Dendritic cell treated with granulocyte-macrophage colony-stimulating factor and Interleukin-4, amounts not matched to agents 40 ng/mL and 50 ng/mL, for 4 days (primary cell): ENCODE measurements at regions of chr19 and their contacts with region 1.

Region 1: DNA sequence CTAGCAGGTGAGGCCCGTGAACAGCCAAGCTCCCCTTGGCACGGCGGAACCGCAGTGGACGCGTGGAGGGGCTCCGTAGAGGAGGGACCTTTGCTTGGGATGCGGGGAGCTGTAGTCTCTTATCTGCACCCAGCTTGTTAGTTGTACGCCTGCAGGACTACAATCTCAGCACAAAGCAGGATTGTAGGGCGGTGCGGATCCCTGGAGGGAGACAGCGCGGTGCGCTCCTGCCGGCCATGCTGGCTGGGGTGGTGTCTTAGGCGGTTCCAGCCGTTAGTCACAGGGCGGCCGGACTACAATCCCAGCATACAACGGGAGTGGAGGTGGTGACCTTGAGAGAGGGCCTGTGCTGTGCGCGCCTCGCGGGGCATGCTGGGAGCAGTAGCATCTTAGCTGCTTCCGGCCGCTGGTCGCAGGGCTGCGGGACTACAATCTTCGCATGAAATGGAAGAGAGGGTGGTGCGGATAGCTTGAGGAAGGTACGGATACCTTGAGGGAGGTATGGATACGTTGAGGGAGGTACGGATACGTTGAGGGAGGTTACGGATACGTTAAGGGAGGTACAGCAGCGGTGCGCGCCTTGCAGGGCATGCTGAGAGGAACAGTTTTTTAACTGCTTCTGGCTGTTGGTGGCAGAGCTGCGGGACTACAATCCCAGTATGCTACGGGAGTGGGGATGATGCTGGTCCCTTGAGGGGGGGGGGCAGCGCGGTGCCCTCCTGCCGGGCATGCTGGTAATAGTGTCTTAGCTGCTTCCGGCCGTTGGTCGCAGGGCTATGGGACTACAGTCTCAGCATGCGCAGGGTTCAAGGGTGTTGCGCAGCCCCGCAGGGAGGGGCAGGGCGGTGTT is 1419.1 kb downstream of the UQCRFS1 start:
- H3K4me3 Mint-ChIP-seq: peak overlapping the region; percentile 93
- H3K27ac Mint-ChIP-seq: peak overlapping the region; percentile 91
- H3K4me1 Mint-ChIP-seq: peaks cover 25% of the 10 kb centered on the region
- H3K27me3 Mint-ChIP-seq: no peaks in the 10 kb centered on the region

Region 2: DNA sequence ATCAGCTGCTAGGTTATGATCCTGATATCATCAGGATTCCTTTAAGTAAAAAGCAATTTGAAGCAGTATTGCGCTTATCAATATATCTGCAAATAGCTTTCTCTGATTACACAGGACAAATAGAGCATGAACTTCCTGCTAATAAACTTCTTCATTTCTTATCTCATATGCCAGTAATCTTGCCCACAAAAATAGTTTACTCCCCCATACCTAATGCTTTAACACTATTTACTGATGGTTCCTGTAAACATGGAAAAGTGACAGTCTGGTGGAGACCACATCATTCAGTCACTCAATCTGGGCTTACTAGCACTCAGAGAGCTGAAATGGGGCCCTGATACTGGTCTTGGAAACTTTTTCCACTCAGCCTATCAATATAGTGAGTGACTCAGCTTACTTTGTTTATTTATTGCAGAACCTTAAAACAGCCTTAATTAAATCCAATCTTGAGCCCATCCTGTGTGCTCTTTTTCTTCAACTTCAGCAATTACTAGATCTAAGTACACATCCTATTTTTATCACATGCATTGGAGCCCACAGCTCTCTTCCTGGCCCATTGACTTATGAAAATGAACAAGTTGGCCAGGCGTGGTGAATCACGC is 45.2 kb before region 1 on chr19:
- intact Hi-C with region 1: no loop called
- H3K4me3 Mint-ChIP-seq: no peak overlapping the region
- H3K27ac Mint-ChIP-seq: no peak overlapping the region
- H3K4me1 Mint-ChIP-seq: no peaks in the 10 kb centered on the region
- H3K27me3 Mint-ChIP-seq: peaks cover 3% of the 10 kb centered on the region

Region 3: GRCh38 chr19:27974082-27974513 is 180.2 kb after region 1 on chr19:
- intact Hi-C with region 1: no loop called
- H3K4me3 Mint-ChIP-seq: no peak overlapping the region
- H3K27ac Mint-ChIP-seq: no peak overlapping the region
- H3K4me1 Mint-ChIP-seq: no peaks in the 10 kb centered on the region
- H3K27me3 Mint-ChIP-seq: no peaks in the 10 kb centered on the region

Region 4: DNA sequence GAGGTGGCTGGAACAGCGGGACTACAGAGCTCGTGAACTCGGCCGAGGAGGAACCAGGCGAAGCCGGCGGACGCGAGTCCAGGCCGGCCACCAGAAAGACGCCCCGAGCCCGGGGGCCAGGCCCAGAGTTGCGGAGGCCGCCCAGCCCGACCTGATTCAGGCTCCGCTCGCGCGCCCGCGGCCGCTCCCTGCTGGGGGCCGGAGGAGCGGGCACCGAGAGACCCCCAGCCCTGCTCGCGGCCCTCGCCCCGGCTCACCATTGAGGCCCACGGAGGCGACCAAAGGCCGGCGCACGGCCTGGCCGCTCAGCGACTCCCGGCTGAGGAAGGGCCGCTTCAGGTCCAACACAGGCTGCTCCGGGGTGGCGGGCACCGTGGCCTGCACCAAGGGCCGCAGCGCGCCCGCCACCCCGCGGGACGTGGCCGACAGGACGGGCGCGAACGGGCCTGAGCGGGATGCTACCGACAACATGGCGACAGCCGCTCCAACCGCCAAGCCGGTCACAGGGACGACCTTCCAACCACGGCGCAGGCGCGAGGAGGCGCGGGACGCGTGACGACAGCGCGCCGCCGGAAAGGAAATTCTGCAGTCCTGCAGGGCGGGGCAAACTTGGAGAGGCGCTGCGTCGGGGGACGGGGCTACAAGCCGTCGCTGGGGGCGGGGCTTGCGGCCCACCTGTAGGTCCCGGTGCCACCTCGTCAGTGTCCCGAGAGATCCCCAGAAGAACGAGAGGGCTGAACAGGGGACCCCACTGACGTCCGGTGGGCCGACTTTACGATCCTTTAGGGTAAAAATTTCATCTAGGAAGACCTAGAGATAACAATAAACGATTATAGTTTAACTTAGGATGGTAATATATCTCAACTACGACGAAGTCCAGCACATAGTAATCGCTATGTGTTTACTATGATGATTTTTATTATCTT is 1419.0 kb after region 1 on chr19 and contains the start of gene UQCRFS1:
- intact Hi-C with region 1: loop called (anchors 5 kb)
- H3K4me3 Mint-ChIP-seq: peak within 1 kb of the TSS; percentile 95
- H3K27ac Mint-ChIP-seq: peak within 1 kb of the TSS; percentile 92
- H3K4me1 Mint-ChIP-seq: peaks cover 39% of the 10 kb centered on the region
- H3K27me3 Mint-ChIP-seq: peaks cover 3% of the 10 kb centered on the region